ENCODE measurements at regions of chr17 and their contacts with region 1.

Region 1: DNA sequence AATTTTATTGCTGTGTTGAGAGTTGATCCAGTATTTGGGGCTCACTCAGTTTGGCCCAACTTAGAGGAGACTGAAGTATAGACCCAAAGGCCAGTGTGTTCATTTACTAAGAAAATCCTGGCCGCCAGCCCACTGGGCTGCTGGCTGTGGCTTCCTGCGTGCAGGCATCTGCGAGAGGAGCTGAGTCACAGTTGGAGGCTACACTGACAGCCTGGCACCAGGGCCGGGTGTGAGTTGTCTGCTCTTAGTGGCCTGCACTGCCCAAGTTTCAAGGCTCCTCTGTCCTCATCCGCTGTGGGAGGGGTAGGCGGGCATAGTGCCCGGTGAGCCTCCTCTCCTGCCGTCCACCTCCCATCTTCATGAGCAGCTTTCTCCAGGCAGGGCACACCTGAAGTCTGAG is 54.2 kb downstream of the PLD6 start:
- DNase-seq: peak; percentile 96 to 98
- H3K4me3 ChIP-seq: no peak overlapping the region
- H3K27ac ChIP-seq: peak overlapping the region; percentile 34 to 81
- H3K4me1 ChIP-seq: peaks cover 0 to 30% (median 20%) of the 10 kb centered on the region in 4 donors
- H3K27me3 ChIP-seq: no peaks in the 10 kb centered on the region
- CTCF ChIP-seq: no peak

Region 2: GRCh38 chr17:17237026-17237799 is 85.3 kb after region 1 on chr17 and contains the start of gene FLCN:
- intact Hi-C with region 1: loop called (anchors 5 kb)
- DNase-seq: peak; percentile 92 to 95
- H3K4me3 ChIP-seq: peak within 1 kb of the TSS; percentile 90 to 95
- H3K27ac ChIP-seq: peak within 1 kb of the TSS; percentile 93 to 96
- H3K4me1 ChIP-seq: peaks cover 0 to 35% (median 18%) of the 10 kb centered on the region in 4 donors
- H3K27me3 ChIP-seq: no peaks in the 10 kb centered on the region
- CTCF ChIP-seq: peak in 1 of 2 experiments; percentile 42

Region 3: DNA sequence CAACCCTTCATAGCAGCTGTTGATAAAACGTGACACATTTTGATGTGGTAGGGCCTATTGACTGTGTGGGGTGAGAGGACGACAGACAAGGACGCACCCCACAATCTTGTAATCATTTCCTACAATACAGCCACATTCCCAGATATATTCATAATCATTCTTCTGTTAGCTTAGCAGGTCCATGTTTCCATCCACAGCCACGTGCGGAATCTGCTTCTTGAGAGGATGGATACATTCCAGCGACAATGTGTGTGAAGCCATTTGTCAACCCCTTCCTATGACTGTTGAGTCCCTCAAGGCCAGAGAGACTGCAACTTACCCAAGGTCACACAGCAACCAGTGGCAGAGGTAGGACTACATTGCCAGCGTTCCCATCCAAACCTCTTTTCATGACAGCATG is 137.7 kb after region 1 on chr17:
- intact Hi-C with region 1: no loop called
- DNase-seq: peak in 1 of 2 donors; percentile 1
- H3K4me3 ChIP-seq: no peak overlapping the region
- H3K27ac ChIP-seq: no peak overlapping the region
- H3K4me1 ChIP-seq: no peaks in the 10 kb centered on the region
- H3K27me3 ChIP-seq: no peaks in the 10 kb centered on the region
- CTCF ChIP-seq: no peak